ENCODE measurements at regions of chr1 and their contacts with region 1.

Region 1: GRCh38 chr1:25997828-25998761 is at the start of gene PAFAH2:
- DNase-seq: peak; percentile 89 to 99 (median 96)
- ATAC-seq: peak; percentile 95 to 97
- H3K4me3 Mint-ChIP-seq: peak within 1 kb of the TSS; percentile 92 to 98 (median 97)
- H3K27ac Mint-ChIP-seq: peak within 1 kb of the TSS; percentile 96 to 100 (median 99)
- H3K4me1 Mint-ChIP-seq: peaks cover 18 to 41% (median 36%) of the 10 kb centered on the region in 4 donors
- H3K27me3 Mint-ChIP-seq: no peaks in the 10 kb centered on the region
- polyA plus RNA-seq, gene PAFAH2: 16.4 to 25.5 (median 17.3) TPM

Region 2: DNA sequence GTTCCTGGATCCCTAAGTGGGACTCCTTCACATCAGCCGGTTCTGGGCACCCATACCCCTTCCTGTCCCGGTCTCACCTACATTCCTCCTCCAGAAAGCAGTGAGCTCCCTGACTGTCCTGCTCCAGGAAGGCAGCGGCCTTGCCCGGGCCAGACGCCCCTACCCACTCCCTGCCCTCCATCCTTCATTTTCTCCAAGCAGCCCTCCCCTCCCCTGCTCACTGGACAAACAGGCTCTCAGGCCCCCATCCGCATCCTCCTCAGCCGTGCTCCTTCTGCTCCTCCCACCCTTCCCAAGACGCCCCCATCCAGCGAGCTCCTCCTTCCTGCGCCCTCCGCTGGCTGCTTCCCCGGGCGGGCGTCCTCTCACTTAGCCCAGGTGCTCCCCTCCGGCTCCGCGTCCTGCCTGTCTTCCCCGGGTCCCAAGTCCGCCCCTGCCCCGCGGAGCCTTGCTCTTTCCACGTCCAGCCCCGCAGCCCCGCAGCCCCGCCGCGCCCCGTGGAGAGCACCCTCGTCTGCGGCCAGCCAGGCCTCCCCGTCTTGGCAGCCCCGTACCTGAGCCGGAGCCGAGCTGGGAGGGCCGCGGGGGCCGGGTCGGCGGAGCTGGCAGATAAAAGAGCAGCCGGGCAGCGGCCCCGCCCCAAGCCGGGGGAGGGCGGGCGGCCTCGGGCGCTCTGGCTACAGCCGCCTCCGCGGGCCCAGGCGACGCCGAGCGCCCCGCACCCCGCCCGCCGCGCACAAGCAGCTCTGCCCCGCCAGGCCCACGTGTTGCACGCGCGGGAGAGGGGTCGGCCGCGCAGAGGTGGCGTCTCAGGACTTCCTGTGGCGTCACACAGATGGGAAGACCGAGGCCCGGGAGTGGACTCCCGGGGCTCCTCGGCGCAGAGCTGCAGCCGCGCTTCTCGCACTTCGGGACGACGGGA is 122.9 kb before region 1 on chr1 and contains the start of gene PAQR7:
- POLR2A ChIA-PET with region 1: interaction called, 11 read pairs
- DNase-seq: peak; percentile 32 to 82 (median 60)
- ATAC-seq: peak; percentile 84 to 91
- H3K4me3 Mint-ChIP-seq: peak within 1 kb of the TSS; percentile 81 to 89 (median 85)
- H3K27ac Mint-ChIP-seq: peak within 1 kb of the TSS; percentile 31 to 92 (median 86)
- H3K4me1 Mint-ChIP-seq: peaks cover 5 to 31% (median 17%) of the 10 kb centered on the region in 4 donors
- H3K27me3 Mint-ChIP-seq: no peaks in the 10 kb centered on the region
- polyA plus RNA-seq, gene PAQR7: 0.08 to 0.32 (median 0.30) TPM

Region 3: DNA sequence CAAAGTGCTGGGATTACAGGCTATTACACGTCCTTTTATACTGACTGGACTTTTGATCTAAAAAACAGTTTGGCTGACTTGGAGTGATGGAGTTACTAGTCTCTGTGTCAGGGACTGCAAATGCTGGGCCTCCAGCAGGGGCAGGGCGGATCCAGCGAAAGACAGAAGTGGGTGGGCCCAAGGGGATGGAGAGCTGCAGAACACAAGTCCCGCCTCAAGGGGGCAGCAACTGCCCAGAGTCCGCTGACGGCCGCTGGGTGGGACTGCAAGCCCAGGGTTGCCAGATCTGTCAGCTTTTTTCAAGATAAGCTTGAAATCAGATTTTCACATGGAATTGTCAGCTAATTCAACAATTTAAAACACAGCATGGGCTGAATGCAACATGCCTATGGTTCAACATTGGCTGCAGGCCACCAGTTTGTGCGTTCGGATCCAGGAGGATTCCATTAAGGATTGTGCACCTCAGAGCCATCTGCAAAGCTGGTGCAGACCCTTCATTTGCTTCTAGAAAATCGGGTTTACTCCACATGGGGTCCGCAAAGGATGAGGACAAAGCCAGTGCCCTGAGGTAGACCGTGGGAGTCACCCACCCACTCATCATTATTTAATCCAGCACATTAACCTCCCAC is 102.6 kb before region 1 on chr1:
- POLR2A ChIA-PET with region 1: interaction called, 97 read pairs
- DNase-seq: peak; percentile 87 to 95 (median 92)
- ATAC-seq: peak; percentile 99 to 100
- H3K4me3 Mint-ChIP-seq: no peak overlapping the region
- H3K27ac Mint-ChIP-seq: peak overlapping the region in 9 of 10 donors; percentile 4 to 85 (median 63)
- H3K4me1 Mint-ChIP-seq: peaks cover 4 to 11% (median 9%) of the 10 kb centered on the region in 4 donors
- H3K27me3 Mint-ChIP-seq: no peaks in the 10 kb centered on the region

Region 4: GRCh38 chr1:25904943-25905679 is 93.0 kb before region 1 on chr1:
- POLR2A ChIA-PET with region 1: interaction called, 29 read pairs
- DNase-seq: peak; percentile 76 to 96 (median 88)
- ATAC-seq: peak; percentile 66 to 71
- H3K4me3 Mint-ChIP-seq: peak overlapping the region; percentile 84 to 98 (median 92)
- H3K27ac Mint-ChIP-seq: peak overlapping the region; percentile 84 to 97 (median 94)
- H3K4me1 Mint-ChIP-seq: peaks cover 8 to 26% (median 19%) of the 10 kb centered on the region in 4 donors
- H3K27me3 Mint-ChIP-seq: no peaks in the 10 kb centered on the region

Region 5: DNA sequence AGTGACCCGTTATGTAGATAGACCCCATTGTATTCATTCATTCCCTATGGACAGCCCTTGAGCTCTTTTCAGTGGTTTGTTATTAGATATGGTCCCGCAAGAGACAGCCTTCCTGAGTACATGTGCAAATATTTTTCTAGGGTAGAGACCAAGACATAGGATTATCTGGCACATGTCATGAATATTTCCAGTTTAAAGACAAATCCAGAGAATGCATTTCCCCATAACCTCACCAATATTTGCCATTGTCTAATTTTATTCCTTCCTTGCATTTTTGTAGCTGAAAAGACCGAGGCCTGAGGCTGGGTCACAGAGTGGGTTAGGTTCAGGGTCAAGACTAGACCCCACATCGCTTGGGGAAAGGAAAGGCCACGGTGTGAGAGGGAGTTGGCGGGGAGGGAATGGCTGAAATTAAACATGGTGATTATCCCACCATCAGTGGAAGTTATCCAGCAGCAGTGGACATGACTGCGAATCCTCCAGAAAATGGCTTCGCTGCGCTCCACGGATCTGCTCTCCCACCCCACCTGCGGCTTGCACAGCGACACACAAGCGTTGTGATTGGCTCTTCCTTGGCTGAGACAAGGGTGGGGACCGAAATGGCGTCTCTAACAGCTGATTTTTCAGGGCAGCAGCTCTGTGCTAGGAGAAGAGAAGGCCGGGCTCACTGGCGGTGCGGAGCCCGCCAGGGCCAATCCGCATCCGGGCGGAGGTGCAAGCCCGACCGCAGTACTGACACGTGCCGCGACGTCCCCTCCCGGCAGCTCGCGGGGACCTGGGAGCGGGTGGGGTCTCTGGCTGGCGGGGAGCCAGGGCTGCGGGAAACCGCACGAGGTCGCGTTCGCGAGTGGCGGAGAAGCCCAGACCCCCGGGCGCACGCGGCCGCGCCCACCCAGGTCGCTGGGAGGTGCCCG is 75.8 kb before region 1 on chr1:
- POLR2A ChIA-PET with region 1: interaction called, 23 read pairs
- DNase-seq: peak; percentile 26 to 79 (median 55)
- ATAC-seq: peak; percentile 84 to 88
- H3K4me3 Mint-ChIP-seq: peak overlapping the region; percentile 80 to 92 (median 90)
- H3K27ac Mint-ChIP-seq: peak overlapping the region; percentile 60 to 91 (median 85)
- H3K4me1 Mint-ChIP-seq: peaks cover 12 to 40% (median 32%) of the 10 kb centered on the region in 4 donors
- H3K27me3 Mint-ChIP-seq: peaks cover 0 to 2% (median 0%) of the 10 kb centered on the region in 5 donors

Region 6: GRCh38 chr1:25971066-25971810 is 26.9 kb before region 1 on chr1:
- POLR2A ChIA-PET with region 1: interaction called, 49 read pairs
- DNase-seq: peak in 4 of 10 donors; percentile 5 to 67 (median 52)
- ATAC-seq: peak; percentile 89 to 90
- H3K4me3 Mint-ChIP-seq: peak overlapping the region; percentile 7 to 79 (median 60)
- H3K27ac Mint-ChIP-seq: peak overlapping the region; percentile 57 to 97 (median 85)
- H3K4me1 Mint-ChIP-seq: peaks cover 31 to 61% (median 33%) of the 10 kb centered on the region in 4 donors
- H3K27me3 Mint-ChIP-seq: no peaks in the 10 kb centered on the region

Measured in naive thymus-derived CD8-positive, alpha-beta T cell (primary cell).